Prostate gland (tissue), 2 donors: ENCODE measurements at regions of chr6 and their contacts with region 1.

Region 1: DNA sequence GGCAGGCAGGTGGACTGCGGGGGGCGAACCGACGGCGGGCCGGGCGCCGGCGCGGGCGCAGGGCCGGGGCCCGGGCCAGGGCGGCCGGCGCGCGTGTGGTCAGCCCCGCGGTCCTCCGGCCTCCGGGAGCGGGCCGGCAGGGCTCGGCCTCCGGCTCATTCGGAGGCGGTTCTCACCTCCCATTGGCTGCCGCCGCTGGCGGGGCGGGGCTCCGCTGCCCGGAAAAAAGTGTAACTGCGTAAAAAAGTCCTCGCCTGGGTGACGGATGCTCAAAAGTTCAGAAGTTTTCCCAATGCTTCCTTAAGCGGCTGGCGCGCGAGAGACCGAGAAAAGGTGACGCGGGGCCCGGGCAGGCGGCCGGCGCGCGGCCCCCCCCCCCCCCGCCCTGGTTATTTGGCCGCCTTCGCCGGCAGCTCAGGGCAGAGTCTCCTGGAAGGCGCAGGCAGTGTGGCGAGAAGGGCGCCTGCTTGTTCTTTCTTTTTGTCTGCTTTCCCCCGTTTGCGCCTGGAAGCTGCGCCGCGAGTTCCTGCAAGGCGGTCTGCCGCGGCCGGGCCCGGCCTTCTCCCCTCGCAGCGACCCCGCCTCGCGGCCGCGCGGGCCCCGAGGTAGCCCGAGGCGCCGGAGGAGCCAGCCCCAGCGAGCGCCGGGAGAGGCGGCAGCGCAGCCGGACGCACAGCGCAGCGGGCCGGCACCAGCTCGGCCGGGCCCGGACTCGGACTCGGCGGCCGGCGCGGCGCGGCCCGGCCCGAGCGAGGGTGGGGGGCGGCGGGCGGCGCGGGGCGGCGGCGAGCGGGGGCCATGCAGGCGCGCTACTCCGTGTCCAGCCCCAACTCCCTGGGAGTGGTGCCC is at the start of gene FOXC1:
- DNase-seq: peak; percentile 76
- H3K4me3 ChIP-seq: peak within 1 kb of the TSS; percentile 51 to 58
- H3K27ac ChIP-seq: peak within 1 kb of the TSS; percentile 83 to 91
- H3K4me1 ChIP-seq: peaks cover 3% of the 10 kb centered on the region
- H3K27me3 ChIP-seq: peaks cover 8% of the 10 kb centered on the region
- CTCF ChIP-seq: no peak
- POLR2A ChIP-seq: peak; percentile 42
- total RNA-seq, gene FOXC1: 9.2 to 11.2 TPM

Region 2: DNA sequence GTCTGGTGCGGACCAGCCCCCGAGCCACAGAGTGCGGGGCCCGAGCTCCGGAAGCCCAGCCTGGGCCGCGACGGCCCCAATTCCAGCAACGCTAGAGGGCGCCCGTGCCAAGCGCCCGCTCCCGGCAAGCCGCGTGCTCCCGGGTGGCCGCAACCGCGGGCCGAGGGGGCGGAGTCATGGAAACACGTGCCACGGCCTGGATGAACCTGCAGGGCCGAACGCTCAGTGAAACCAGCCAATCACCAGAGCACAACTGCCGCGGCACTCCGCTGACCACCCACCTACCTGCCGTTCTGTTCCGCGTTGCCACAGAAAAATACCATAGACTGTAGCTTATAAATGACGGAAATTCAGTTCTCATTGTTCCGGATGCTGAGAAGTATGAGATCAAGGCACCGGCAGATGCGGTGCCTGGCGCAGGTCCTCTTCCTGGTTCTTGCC is 85.8 kb before region 1 on chr6:
- intact Hi-C with region 1: no loop called
- DNase-seq: peak; percentile 43
- H3K4me3 ChIP-seq: no peak overlapping the region
- H3K27ac ChIP-seq: no peak overlapping the region
- H3K4me1 ChIP-seq: no peaks in the 10 kb centered on the region
- H3K27me3 ChIP-seq: no peaks in the 10 kb centered on the region
- CTCF ChIP-seq: peak; percentile 23 to 73 (median 60)
- POLR2A ChIP-seq: no peak

Region 3: GRCh38 chr6:2037237-2037926 is 427.5 kb after region 1 on chr6:
- intact Hi-C with region 1: loop called (anchors 10 kb)
- DNase-seq: no peak
- H3K4me3 ChIP-seq: no peak overlapping the region
- H3K27ac ChIP-seq: no peak overlapping the region
- H3K4me1 ChIP-seq: no peaks in the 10 kb centered on the region
- H3K27me3 ChIP-seq: no peaks in the 10 kb centered on the region
- CTCF ChIP-seq: peak in 1 of 4 experiments; percentile 8
- POLR2A ChIP-seq: no peak

Region 4: DNA sequence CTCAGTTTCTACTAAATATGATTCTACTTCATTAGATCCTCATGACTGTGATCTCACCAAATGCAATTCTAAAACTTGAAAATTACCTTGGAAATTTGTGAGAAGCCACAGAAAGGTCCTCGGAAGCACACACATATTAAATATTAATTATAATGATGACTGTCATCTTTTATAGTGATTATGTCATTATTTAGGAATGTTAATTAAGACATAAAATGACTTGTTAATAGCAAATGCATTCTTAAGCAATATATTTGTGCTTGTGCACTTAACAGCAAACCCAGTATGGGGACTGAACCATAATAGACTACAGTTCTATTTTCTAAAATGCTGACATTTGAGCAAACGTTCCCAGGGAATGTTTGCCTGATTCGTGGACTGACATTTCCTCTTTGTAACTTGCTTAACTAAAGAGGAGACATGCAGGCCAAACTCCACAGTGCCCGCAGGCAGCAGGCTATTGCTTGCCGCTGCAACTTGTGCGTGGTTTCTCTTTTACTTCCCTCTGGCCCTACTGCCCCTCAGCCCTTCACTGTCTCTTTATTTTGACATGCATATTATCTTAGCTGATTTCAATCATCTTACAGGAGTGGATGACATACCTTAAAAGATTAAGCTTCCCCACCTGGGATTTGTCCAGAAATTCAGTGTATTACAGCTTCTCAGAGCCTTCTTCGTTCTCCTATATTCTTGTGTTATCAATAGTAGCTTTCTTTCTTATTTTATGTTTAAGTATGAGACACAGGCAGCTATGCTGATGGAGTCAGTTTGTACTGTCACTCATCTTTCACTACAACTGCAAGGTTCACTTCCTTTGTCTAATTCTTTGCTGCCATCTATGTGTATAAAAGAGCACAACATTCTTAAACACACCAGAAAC is 494.0 kb after region 1 on chr6:
- intact Hi-C with region 1: loop called (anchors 5 kb)
- DNase-seq: no peak
- H3K4me3 ChIP-seq: no peak overlapping the region
- H3K27ac ChIP-seq: no peak overlapping the region
- H3K4me1 ChIP-seq: no peaks in the 10 kb centered on the region
- H3K27me3 ChIP-seq: no peaks in the 10 kb centered on the region
- CTCF ChIP-seq: peak in 3 of 4 experiments; percentile 20 to 71 (median 70)
- POLR2A ChIP-seq: no peak

Region 5: DNA sequence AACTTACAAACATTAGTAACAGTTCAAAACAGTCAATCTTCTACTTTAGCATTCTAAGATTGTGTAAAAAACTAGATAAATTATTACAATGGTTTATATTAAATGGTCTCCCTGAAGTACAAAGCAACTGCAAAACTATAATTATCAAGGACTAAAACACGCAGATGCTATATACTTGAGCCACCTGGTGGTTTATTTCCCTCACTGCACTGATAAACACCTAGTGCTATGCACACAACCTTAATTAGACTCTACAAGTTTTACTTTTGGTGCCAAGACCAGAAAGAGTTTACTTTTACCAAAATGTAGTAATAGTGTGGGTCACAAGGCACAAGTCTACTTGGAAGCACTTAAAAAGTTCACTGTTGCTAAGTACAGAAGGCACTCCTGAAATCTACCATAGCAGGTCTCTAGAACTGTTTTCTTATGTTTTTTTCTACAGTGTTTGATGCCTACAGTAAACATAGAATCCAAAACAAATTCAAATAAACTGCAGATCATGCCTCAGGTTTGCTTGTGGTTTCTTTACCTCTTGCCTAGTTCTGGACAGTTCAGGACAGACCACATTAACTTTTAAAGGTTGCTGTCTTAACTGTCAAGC is 586.3 kb after region 1 on chr6:
- intact Hi-C with region 1: loop called (anchors 5 kb)
- DNase-seq: peak; percentile 32
- H3K4me3 ChIP-seq: no peak overlapping the region
- H3K27ac ChIP-seq: no peak overlapping the region
- H3K4me1 ChIP-seq: no peaks in the 10 kb centered on the region
- H3K27me3 ChIP-seq: no peaks in the 10 kb centered on the region
- CTCF ChIP-seq: peak; percentile 52 to 86 (median 75)
- POLR2A ChIP-seq: no peak

Region 6: DNA sequence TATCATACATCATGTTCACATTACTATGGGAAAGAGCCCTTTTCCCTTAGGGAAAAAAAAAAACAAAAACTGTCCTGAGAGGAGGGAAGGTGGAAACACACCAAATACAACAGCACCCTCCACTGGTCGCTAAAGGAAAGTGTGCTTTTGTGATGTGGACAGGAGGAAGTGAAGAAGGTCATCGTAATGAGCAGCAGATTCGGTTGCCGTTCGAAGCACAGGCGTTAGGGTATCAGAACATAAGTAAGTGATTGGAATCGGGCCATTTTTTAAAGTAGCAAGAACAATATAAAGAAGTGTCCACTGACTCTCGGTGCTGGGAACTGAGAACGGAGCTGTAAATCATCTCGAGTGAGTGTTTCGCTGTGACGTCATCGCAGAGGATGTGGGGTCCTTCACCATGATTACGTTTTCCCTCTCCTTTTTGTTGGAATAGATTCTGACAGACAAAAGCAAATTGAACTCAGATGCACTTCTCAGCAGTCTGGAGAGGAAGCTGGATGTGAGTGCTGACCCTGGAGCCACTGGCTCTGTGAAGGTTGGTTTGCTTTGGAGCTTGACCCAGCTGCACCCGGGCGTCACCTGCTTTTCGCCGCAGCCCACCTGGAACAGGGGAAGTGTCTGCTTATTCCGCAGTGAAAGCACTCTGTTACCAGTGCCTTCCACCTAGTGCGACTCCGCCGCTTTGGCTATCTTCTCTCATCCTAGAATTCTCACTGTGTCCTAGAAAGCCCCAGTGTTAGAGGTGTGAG is 839.1 kb after region 1 on chr6:
- intact Hi-C with region 1: loop called (anchors 5 kb)
- DNase-seq: peak; percentile 29
- H3K4me3 ChIP-seq: no peak overlapping the region
- H3K27ac ChIP-seq: no peak overlapping the region
- H3K4me1 ChIP-seq: no peaks in the 10 kb centered on the region
- H3K27me3 ChIP-seq: no peaks in the 10 kb centered on the region
- CTCF ChIP-seq: peak; percentile 14 to 59 (median 43)
- POLR2A ChIP-seq: no peak